Endothelial cell of umbilical vein (primary cell): ENCODE measurements at regions of chr1 and their contacts with region 1.

Region 1: DNA sequence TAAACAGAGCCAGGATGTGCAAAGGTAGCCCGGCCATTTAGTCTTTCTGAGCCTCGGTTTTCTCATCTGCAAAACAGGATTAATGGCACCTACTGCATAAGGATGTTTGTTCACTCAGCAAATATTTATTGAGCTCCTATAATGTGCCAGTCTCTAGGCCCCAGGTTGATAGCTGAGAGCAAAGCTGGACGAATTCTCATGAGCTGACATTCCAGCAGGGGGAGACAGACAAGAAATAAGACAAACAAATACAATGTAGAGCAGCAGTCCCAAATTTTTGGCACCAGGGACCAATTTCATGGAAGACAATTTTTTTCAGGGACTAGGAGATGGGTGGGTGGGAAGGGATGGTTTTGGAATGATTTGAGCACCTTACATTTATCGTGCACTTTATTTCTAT is 74.3 kb upstream of the PAX7 start:
- DNase-seq: no peak
- H3K4me3 ChIP-seq: no peak overlapping the region
- H3K27ac ChIP-seq: no peak overlapping the region
- H3K4me1 ChIP-seq: no peaks in the 10 kb centered on the region
- H3K27me3 ChIP-seq: no peaks in the 10 kb centered on the region
- CTCF ChIP-seq: peak; percentile 17 to 21
- POLR2A ChIP-seq: no peak

Region 2: DNA sequence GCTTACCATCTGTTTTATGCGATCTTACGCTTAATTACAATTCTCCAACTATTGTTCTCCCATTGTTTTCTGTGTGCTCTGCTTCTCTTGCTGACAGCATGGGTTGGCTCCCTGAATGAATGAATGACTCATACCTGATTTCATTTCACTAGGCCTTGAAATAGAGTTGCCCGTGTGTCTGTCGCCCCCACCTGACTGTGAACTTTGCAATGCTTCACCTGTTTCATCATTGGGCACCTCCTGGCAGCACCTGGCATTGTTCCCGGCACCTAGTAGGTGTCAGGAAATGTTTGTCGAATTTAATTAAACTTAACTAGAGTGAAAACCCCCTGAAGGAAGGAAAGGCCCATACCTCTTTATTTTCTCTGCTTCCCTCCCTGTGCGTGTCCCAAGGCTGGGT is 196.1 kb before region 1 on chr1:
- CTCF ChIA-PET with region 1: no interaction called
- POLR2A ChIA-PET with region 1: no interaction called
- dilution Hi-C with region 1: no loop called
- intact Hi-C with region 1: no loop called
- DNase-seq: no peak
- H3K4me3 ChIP-seq: no peak overlapping the region
- H3K27ac ChIP-seq: no peak overlapping the region
- H3K4me1 ChIP-seq: no peaks in the 10 kb centered on the region
- H3K27me3 ChIP-seq: no peaks in the 10 kb centered on the region
- CTCF ChIP-seq: no peak
- POLR2A ChIP-seq: no peak

Region 3: GRCh38 chr1:18511149-18511873 is 45.1 kb before region 1 on chr1:
- CTCF ChIA-PET with region 1: no interaction called
- POLR2A ChIA-PET with region 1: no interaction called
- dilution Hi-C with region 1: no loop called
- intact Hi-C with region 1: no loop called
- DNase-seq: no peak
- H3K4me3 ChIP-seq: no peak overlapping the region
- H3K27ac ChIP-seq: no peak overlapping the region
- H3K4me1 ChIP-seq: no peaks in the 10 kb centered on the region
- H3K27me3 ChIP-seq: no peaks in the 10 kb centered on the region
- CTCF ChIP-seq: no peak
- POLR2A ChIP-seq: no peak

Region 4: DNA sequence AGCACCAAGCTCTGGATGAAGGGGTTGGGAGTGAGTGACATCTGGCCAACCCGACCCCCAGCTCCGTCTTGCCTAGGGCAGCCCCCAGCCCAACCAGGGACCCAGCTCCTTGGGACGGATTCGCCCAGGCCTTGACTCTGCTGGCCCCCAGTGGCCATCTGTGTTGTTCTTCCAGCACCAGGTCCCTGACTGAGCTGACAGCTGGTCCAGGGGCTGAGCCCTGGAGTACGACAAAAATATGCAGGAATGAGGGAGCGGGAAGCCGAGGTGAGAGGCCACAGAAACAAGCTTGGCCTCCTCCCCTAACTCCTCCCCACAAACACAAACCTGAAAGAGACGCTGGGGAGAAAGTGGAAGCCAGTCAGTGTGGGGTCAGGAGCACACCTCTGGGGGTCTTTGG is 19.3 kb after region 1 on chr1:
- CTCF ChIA-PET with region 1: interaction called, 45 read pairs
- POLR2A ChIA-PET with region 1: interaction called, 3 read pairs
- dilution Hi-C with region 1: no loop called
- intact Hi-C with region 1: no loop called
- DNase-seq: peak; percentile 18
- H3K4me3 ChIP-seq: no peak overlapping the region
- H3K27ac ChIP-seq: no peak overlapping the region
- H3K4me1 ChIP-seq: no peaks in the 10 kb centered on the region
- H3K27me3 ChIP-seq: no peaks in the 10 kb centered on the region
- CTCF ChIP-seq: peak; percentile 39 to 75
- POLR2A ChIP-seq: no peak

Region 5: DNA sequence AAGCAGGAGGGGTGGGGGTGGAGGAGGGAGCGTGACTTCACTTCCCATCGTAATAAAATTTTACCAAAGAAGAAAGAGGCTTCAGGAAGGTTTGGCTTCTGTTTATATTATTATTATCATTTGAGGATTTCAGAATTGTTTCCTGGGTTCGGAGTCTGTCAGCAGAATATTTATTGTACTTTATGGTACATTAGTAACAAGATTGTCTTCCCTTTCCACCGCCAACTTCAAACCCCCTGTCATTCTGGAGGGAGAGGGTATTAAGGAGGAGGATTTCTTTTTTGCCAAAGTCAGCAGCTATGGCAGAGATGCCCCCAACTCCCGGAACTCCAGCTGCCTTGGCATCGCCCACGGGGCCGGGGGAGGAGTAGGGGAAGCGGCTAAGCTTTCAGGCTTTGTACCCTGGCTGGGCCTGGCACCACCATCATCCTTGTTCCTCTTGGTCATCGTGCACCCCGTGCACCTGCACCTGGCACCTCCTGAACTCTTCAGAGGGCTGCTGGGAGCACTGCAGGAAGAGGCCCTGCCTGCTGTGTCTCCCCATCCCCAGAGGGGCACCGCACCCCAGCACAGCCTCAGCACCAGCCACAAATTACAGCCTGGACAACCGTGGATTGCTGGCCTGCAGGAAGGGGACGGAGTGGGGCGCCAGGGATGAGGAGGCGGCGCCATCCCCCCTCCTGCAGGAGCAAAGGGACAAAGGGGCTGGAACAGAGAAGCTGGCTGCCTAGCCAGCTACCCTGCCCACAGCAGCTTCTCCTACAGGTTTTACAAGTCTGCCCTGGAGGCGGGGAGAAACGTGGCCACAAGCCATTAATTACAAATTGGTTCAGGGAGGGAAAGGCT is 50.3 kb after region 1 on chr1:
- CTCF ChIA-PET with region 1: no interaction called
- POLR2A ChIA-PET with region 1: no interaction called
- dilution Hi-C with region 1: no loop called
- intact Hi-C with region 1: no loop called
- DNase-seq: no peak
- H3K4me3 ChIP-seq: no peak overlapping the region
- H3K27ac ChIP-seq: no peak overlapping the region
- H3K4me1 ChIP-seq: no peaks in the 10 kb centered on the region
- H3K27me3 ChIP-seq: no peaks in the 10 kb centered on the region
- CTCF ChIP-seq: no peak
- POLR2A ChIP-seq: no peak